Mammary epithelial cell (primary cell): ENCODE measurements at regions of chrX and their contacts with region 1.

Region 1: DNA sequence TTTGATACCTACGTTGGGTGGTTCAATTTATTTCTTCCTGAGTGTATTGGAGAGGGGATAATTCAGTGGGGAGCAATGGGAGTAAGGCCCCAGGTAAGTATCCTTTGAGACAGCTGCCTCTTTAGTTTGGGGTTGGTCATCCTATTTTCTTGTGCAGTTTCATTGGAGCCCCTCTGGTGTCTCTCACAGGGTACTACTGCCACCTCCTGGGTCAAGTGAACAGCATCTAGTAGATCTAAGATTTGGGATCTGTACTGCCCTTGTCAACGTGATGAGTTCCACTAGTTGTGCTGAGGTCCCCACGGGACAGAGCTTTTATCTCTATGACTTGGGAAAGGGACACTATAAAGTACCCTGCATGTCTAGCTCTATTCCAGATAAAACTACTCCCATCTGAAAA is 80.6 kb downstream of the PBDC1 start:
- DNase-seq: peak; percentile 32
- H3K4me3 ChIP-seq: no peak overlapping the region
- H3K27ac ChIP-seq: no peak overlapping the region
- H3K4me1 ChIP-seq: no peaks in the 10 kb centered on the region
- H3K27me3 ChIP-seq: no peaks in the 10 kb centered on the region
- CTCF ChIP-seq: peak; percentile 18 to 50

Region 2: GRCh38 chrX:76148753-76149152 is 104.7 kb before region 1 on chrX:
- CTCF ChIA-PET with region 1: no interaction called
- dilution Hi-C with region 1: no loop called
- in situ Hi-C with region 1: no loop called
- intact Hi-C with region 1: loop called (anchors 5 kb)
- DNase-seq: peak; percentile 30
- H3K4me3 ChIP-seq: peak overlapping the region in 2 of 3 experiments; percentile 10 to 18
- H3K27ac ChIP-seq: peak overlapping the region; percentile 71
- H3K4me1 ChIP-seq: peaks cover 12% of the 10 kb centered on the region
- H3K27me3 ChIP-seq: no peaks in the 10 kb centered on the region
- CTCF ChIP-seq: no peak

Region 3: GRCh38 chrX:76172325-76172893 is 81.0 kb before region 1 on chrX:
- CTCF ChIA-PET with region 1: no interaction called
- dilution Hi-C with region 1: no loop called
- in situ Hi-C with region 1: no loop called
- intact Hi-C with region 1: loop called (anchors 2 kb)
- DNase-seq: no peak
- H3K4me3 ChIP-seq: peak overlapping the region; percentile 52 to 67 (median 61)
- H3K27ac ChIP-seq: peak overlapping the region; percentile 65
- H3K4me1 ChIP-seq: peaks cover 13% of the 10 kb centered on the region
- H3K27me3 ChIP-seq: no peaks in the 10 kb centered on the region
- CTCF ChIP-seq: no peak